T-cell (primary cell): ENCODE measurements at regions of chr13 and their contacts with region 1.

Region 1: GRCh38 chr13:45953082-45953481 is 99.5 kb downstream of the ZC3H13 start:
- DNase-seq: no peak
- ATAC-seq: no peak
- H3K4me3 ChIP-seq: no peak overlapping the region
- H3K4me3 Mint-ChIP-seq: no peak overlapping the region
- H3K27ac ChIP-seq: no peak overlapping the region
- H3K27ac Mint-ChIP-seq: peak overlapping the region in 1 of 2 donors; percentile 1
- H3K4me1 ChIP-seq: no peaks in the 10 kb centered on the region
- H3K4me1 Mint-ChIP-seq: no peaks in the 10 kb centered on the region
- H3K27me3 ChIP-seq: no peaks in the 10 kb centered on the region
- H3K27me3 Mint-ChIP-seq: no peaks in the 10 kb centered on the region

Region 2: DNA sequence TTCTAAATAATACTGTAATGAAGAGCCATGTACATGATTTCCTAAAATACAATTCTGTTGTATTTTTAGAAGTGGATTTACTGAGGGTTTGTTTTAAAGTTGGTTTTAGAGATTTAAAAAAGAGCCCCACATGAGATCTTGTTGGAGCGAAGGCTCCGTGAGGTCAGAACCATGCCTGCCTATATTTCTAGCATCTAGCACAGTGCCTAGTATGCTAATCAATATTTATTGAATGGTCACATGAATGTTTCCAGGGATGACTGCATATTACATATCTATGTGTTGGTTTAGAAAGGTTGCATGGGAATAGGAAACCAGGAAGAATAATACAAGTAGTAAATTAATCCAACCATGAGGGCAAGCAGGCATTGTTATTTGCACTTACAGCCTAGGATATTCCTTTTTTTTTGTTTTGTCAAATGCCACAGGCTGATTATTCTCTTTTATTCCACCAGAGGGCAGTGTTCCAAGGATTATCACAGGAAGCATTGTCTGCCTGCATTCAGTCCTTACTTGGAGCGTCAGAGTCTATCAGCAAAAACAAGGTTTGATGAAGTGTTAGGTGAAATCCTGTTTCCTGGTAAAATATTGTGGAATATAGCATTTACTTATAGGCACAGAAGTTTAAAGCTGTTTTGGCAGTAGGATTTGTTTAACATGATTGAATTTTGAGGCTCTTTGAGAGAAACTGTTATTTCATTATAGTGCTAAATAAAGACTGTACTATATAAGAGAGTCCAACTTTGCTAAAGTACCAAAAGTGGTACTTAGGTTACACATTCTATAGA is 441.6 kb before region 1 on chr13:
- CTCF ChIA-PET with region 1: interaction called in 1 of 2 experiments, 11 read pairs
- POLR2A ChIA-PET with region 1: no interaction called
- DNase-seq: peak in 13 of 35 experiments; percentile 4 to 83 (median 16)
- ATAC-seq: peak; percentile 71 to 81 (median 78)
- H3K4me3 ChIP-seq: no peak overlapping the region
- H3K4me3 Mint-ChIP-seq: no peak overlapping the region
- H3K27ac ChIP-seq: peak overlapping the region; percentile 2
- H3K27ac Mint-ChIP-seq: peak overlapping the region; percentile 24 to 81
- H3K4me1 ChIP-seq: no peaks in the 10 kb centered on the region
- H3K4me1 Mint-ChIP-seq: peaks cover 8 to 13% (median 8%) of the 10 kb centered on the region in 3 donors
- H3K27me3 ChIP-seq: no peaks in the 10 kb centered on the region
- H3K27me3 Mint-ChIP-seq: no peaks in the 10 kb centered on the region